HEK293 (cell line): ENCODE measurements at regions of chr9 and their contacts with region 1.

Region 1: GRCh38 chr9:100601216-100601615 is 23.3 kb downstream of the CAVIN4 start:
- H3K4me3 ChIP-seq: no peak overlapping the region
- H3K27ac ChIP-seq: no peak overlapping the region
- H3K4me1 ChIP-seq: no peaks in the 10 kb centered on the region; the same call in 1 of the 2 replicates
- CTCF ChIP-seq: peak; percentile 18; the same call in 1 of the 2 replicates

Region 2: GRCh38 chr9:100619665-100620064 is 18.4 kb after region 1 on chr9:
- CTCF ChIA-PET with region 1: interaction called, 15 read pairs
- POLR2A ChIA-PET with region 1: no interaction called
- H3K4me3 ChIP-seq: no peak overlapping the region
- H3K27ac ChIP-seq: no peak overlapping the region
- H3K4me1 ChIP-seq: no peaks in the 10 kb centered on the region
- CTCF ChIP-seq: no peak

Region 3: DNA sequence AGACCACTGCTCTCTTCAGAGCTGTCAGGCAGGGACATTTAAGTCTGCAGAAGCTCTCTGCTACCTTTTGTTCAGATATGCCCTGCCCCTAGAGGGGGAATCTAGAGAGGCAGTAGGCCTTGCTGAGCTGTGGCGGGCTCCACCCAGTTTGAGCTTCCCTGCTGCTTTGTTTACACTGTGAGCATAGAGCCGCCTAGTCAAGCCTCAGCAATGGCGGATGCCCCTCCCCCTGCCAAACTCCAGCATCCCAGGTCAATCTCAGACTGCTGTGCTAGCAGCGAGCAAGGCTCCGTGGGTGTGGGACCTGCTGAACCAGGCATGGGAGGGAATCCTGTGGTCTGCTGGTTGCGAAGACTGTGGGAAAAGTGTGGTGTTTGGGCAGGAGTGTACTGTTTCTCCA is 36.6 kb after region 1 on chr9:
- CTCF ChIA-PET with region 1: interaction called, 11 read pairs
- POLR2A ChIA-PET with region 1: no interaction called
- H3K4me3 ChIP-seq: no peak overlapping the region
- H3K27ac ChIP-seq: no peak overlapping the region
- H3K4me1 ChIP-seq: no peaks in the 10 kb centered on the region
- CTCF ChIP-seq: no peak

Region 4: DNA sequence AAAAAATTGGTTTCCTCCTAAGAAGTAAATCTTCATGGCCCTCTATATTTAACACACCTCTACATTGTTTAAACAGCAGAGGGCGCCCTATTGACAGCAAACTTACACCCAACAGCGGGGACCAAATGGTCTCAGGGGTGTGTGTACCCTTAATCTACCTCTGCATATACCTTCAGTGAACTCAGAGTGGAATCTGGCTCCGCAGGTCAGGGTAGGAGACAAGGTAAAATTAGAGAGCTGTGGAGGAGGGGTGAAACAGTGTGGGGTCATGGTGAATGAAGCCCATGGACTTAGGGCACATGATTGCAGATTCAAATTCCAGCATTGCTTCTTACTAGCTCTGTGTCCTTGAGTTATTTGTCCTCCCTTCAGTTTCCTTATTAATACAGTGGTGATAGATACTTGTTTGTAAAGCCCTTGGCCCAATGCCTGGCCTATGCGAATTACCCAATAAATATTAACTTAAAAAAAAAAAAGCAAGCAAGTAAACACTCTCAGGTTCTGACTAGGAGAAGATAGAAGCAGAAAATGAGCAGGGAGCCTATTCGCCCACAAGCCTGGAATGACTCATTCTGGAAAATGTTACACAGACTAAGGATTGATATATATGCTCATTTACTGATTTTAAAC is 99.6 kb after region 1 on chr9:
- CTCF ChIA-PET with region 1: interaction called, 41 read pairs
- POLR2A ChIA-PET with region 1: no interaction called
- H3K4me3 ChIP-seq: no peak overlapping the region
- H3K27ac ChIP-seq: no peak overlapping the region
- H3K4me1 ChIP-seq: no peaks in the 10 kb centered on the region
- CTCF ChIP-seq: no peak

Region 5: DNA sequence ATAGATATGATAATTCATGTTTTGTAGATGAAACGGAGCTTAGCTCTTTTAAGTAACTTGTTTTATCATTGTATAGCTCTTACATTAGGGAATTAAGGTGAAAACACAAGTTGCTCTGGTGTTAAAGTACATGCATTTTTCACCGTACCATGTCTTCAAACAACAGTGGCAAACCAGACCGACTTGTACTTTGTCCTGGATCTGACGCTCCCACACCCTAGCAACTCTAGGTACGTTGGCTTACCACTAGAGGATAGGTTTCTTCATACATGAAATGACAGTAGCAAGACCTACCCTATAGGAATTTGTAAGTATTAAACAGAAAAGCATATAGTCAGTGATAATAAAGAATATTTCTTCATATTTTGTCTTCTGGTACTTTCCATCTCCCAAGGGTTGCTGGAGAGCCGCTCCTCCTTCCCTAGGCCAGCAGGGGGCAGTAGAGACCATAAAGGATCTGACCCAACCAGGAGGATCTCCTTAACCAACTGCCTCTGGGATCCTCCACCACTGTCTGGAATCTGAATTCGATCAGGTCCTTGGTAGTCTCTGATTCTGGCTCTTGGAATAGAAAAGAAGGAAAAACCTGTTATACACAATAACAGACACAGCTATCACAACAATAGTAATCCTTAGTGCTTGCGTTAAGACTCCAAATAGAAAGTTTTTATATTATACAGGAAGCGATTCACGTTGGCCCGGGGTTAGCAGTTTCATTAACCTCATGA is 113.3 kb after region 1 on chr9:
- CTCF ChIA-PET with region 1: interaction called, 14 read pairs
- POLR2A ChIA-PET with region 1: no interaction called
- H3K4me3 ChIP-seq: no peak overlapping the region
- H3K27ac ChIP-seq: no peak overlapping the region
- H3K4me1 ChIP-seq: no peaks in the 10 kb centered on the region
- CTCF ChIP-seq: 0 out of 2 replicates have a peak, but pooled peaks have one; percentile 22

Region 6: DNA sequence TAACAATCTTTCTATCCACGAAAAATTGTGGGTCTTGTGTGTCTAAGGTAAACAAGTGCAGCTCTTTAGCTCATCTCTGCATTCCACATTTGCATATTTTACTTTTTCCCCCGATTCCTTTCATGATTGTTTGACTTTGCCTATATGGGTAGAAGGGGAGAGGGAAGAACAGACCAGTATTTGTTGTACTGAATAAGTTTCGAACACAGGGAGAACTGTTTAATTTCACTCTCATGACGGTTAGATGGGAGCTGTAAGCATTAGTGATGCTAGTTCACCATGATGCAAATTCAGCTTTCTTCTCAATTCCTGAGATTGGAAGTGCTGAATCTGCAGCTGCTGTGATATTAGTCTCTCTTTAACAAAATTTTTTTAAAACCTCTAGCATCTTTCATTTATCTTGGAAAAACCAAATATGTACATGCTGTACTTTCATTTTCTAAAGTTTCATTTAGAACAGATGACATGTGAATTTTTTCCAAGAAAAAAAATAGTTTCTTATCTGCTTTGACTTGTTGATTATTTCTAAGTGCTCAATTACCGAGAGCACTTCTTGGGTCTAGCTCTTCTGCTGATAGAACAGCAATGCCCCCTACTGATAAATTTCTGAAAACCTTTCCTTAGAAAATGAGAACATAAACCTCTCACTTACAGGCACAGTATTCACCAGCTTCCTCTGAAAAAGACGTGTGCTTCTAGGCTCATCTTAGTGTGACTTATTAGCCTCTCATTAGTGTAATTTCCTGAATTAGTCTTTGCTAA is 634.1 kb after region 1 on chr9:
- CTCF ChIA-PET with region 1: interaction called, 29 read pairs
- POLR2A ChIA-PET with region 1: no interaction called
- H3K4me3 ChIP-seq: no peak overlapping the region
- H3K27ac ChIP-seq: no peak overlapping the region
- H3K4me1 ChIP-seq: no peaks in the 10 kb centered on the region
- CTCF ChIP-seq: no peak